ENCODE measurements at regions of chr15 and their contacts with region 1.

Region 1: DNA sequence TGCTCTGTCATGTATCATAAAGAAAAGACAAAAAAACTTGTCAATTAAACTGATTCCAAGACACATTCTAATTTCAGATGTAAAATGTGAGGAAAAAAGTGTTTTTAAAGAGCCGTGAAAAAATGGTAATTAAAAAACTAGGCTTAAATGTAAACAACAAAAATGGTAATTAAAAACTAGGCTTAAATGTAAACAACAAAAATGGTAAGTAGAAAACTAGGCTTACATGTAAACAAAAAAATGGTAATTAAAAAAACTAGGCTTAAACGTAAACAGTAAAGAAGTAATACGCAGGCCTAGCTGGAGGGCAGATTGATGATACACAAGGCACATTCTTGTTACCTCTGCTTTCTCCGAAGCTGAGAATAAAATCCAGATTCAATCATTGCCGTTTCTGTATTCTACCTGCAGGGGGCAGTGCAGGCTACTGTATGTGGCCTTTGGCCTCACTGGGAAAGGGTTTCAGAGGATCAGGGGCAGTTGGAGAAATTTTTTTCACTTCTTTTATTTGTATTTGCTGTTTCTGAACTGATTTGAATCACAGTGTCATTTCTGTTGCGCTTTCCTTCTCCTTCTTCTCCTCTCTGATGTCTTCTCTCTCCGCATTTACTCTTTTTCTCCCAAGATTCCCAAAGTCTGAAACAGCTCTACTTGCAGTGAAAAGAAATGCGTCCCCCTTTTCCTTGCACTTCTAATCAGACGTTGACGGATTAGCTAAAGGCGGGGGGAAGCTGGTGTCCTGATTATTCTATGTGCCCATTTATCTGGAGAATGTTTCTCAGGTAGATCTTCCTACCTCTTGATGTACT is 67.2 kb upstream of the MCTP2 start:
- DNase-seq: peak; percentile 78
- H3K4me3 ChIP-seq: no peak overlapping the region
- H3K27ac ChIP-seq: no peak overlapping the region
- H3K4me1 ChIP-seq: no peaks in the 10 kb centered on the region
- H3K27me3 ChIP-seq: no peaks in the 10 kb centered on the region
- CTCF ChIP-seq: peak; percentile 83

Region 2: GRCh38 chr15:93223803-93224202 is 940.4 kb before region 1 on chr15:
- intact Hi-C with region 1: no loop called
- DNase-seq: no peak
- H3K4me3 ChIP-seq: no peak overlapping the region
- H3K27ac ChIP-seq: no peak overlapping the region
- H3K4me1 ChIP-seq: no peaks in the 10 kb centered on the region
- H3K27me3 ChIP-seq: no peaks in the 10 kb centered on the region
- CTCF ChIP-seq: no peak

Region 3: GRCh38 chr15:93358166-93359059 is 805.8 kb before region 1 on chr15:
- intact Hi-C with region 1: no loop called
- DNase-seq: no peak
- H3K4me3 ChIP-seq: no peak overlapping the region
- H3K27ac ChIP-seq: no peak overlapping the region
- H3K4me1 ChIP-seq: no peaks in the 10 kb centered on the region
- H3K27me3 ChIP-seq: no peaks in the 10 kb centered on the region
- CTCF ChIP-seq: no peak

Region 4: DNA sequence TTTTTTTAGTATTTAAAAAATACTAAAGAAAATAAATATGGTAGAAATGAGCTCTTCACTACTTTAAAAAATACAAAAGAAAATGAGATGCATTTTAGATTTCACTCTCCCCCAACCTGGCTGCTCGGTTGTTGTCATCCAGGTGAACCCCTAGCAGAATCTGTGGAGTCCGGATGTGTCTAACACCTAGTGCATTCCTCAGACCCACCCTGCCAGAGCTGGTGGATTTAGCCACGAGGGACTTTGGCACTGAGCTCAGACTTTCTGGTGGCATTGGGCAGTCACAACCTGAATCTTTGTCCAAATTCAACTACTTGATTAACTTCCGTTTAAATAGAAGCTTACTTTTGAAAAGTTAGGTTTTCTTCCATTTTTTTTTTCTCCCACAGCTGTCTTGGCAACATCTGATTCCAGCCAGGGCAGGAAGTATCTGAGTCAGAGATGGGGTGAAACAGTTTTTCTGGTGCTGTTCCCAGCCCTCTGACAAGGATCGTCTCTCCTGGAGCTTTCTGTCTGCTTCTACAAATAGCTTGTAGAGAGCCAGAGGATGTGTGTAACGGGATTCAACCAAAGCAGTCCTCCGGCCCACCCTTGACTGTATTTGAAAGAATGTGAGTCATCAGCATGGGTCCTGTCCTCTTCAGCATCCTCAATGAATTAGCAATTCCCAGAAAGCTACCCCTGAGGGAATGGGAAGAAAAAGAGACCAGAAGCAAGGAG is 234.7 kb before region 1 on chr15:
- intact Hi-C with region 1: no loop called
- DNase-seq: peak; percentile 22
- H3K4me3 ChIP-seq: no peak overlapping the region
- H3K27ac ChIP-seq: no peak overlapping the region
- H3K4me1 ChIP-seq: no peaks in the 10 kb centered on the region
- H3K27me3 ChIP-seq: no peaks in the 10 kb centered on the region
- CTCF ChIP-seq: no peak

Region 5: GRCh38 chr15:94070356-94071295 is 93.6 kb before region 1 on chr15:
- intact Hi-C with region 1: no loop called
- DNase-seq: peak; percentile 41
- H3K4me3 ChIP-seq: no peak overlapping the region
- H3K27ac ChIP-seq: no peak overlapping the region
- H3K4me1 ChIP-seq: no peaks in the 10 kb centered on the region
- H3K27me3 ChIP-seq: no peaks in the 10 kb centered on the region
- CTCF ChIP-seq: no peak

Region 6: GRCh38 chr15:94323076-94323475 is 158.9 kb after region 1 on chr15:
- intact Hi-C with region 1: loop called (anchors 1 kb)
- DNase-seq: no peak
- H3K4me3 ChIP-seq: no peak overlapping the region
- H3K27ac ChIP-seq: no peak overlapping the region
- H3K4me1 ChIP-seq: no peaks in the 10 kb centered on the region
- H3K27me3 ChIP-seq: no peaks in the 10 kb centered on the region
- CTCF ChIP-seq: no peak